ENCODE measurements at regions of chr5 and their contacts with region 1.

Region 1: GRCh38 chr5:73591102-73591695 is 25.7 kb downstream of the UTP15 start:
- DNase-seq: peak; percentile 42
- ATAC-seq: peak; percentile 49
- H3K4me3 Mint-ChIP-seq: no peak overlapping the region
- H3K27ac Mint-ChIP-seq: no peak overlapping the region
- H3K4me1 Mint-ChIP-seq: peaks cover 9% of the 10 kb centered on the region
- H3K27me3 Mint-ChIP-seq: no peaks in the 10 kb centered on the region

Region 2: DNA sequence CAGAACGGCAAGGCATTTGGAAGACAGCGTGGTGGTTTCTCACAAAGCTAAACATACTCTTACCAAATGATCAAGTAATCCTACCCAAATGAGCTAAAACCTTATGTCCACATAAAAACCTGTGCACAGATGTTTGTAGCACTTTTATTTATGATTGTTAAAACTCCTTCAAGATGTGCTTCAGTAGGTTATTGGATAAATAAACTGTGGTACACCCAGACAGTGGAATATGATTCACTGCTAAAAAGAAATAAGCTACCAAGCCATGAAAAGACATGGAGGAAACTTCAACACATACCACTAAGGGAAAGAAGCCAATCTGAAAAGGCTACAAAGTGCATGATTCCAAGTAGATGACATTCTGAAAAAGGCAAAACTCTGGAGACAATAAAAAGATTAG is 236.8 kb before region 1 on chr5:
- CTCF ChIA-PET with region 1: no interaction called
- DNase-seq: no peak
- ATAC-seq: no peak
- H3K4me3 Mint-ChIP-seq: no peak overlapping the region
- H3K27ac Mint-ChIP-seq: no peak overlapping the region
- H3K4me1 Mint-ChIP-seq: peaks cover 6% of the 10 kb centered on the region
- H3K27me3 Mint-ChIP-seq: peaks cover 38% of the 10 kb centered on the region

Region 3: GRCh38 chr5:73792687-73793320 is 201.6 kb after region 1 on chr5:
- CTCF ChIA-PET with region 1: interaction called, 92 read pairs
- DNase-seq: peak; percentile 78
- ATAC-seq: peak; percentile 75
- H3K4me3 Mint-ChIP-seq: no peak overlapping the region
- H3K27ac Mint-ChIP-seq: no peak overlapping the region
- H3K4me1 Mint-ChIP-seq: peaks cover 19% of the 10 kb centered on the region
- H3K27me3 Mint-ChIP-seq: peaks cover 41% of the 10 kb centered on the region

Region 4: DNA sequence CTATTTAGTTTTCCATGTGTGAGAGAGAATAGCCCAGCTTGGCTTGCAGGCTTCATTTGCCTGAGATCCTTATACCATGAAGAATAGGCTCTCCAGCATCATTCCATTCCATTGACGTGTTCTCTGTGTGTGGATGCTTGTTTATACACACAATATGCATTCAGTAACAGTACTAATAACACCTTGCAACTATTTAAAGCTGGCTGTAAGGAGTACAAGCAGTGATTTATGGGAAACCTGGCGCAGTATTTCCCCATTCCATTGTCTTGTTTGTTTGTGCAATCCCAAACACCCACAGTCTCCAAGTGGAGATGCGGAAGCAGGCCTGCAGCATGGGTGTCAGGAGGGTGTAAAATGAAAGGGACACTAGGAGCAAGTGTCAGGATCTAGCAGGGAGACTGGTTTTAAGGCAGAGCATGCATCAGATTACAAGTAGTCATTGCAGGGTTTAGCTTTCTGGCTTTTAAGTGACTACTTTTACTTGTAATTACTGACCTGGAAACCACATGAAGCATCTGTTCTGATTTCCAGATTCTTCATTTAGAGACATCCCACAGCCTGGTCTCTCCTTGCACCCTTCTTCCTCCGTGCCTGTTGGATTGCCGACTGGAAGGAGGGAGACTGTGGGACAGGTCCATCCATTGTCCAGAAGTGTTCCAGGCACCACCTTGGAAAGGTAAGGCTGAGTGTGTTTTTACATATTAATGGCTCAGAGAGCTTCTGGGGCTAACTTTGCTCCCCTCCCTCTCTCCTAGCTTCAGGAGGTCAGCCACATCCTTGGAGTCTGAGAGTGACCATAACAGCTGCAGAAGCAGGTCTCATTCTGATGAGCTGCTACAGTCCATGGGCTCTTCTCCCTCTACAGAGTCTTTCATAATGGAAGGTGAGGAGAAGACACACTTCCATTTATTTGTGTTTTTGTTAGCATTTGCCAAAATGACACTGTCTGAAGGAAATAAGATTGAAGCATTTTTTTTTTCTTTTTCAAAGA is 276.4 kb after region 1 on chr5:
- CTCF ChIA-PET with region 1: no interaction called
- DNase-seq: no peak
- ATAC-seq: no peak
- H3K4me3 Mint-ChIP-seq: no peak overlapping the region
- H3K27ac Mint-ChIP-seq: no peak overlapping the region
- H3K4me1 Mint-ChIP-seq: no peaks in the 10 kb centered on the region
- H3K27me3 Mint-ChIP-seq: peaks cover 21% of the 10 kb centered on the region